ENCODE measurements at regions of chr14 and their contacts with region 1.

Region 1: GRCh38 chr14:74257078-74257989 is 18.1 kb downstream of the VSX2 start:
- DNase-seq: peak; percentile 21
- H3K4me3 ChIP-seq: peak overlapping the region; percentile 69 to 79 (median 78)
- H3K27ac ChIP-seq: no peak overlapping the region
- H3K4me1 ChIP-seq: peaks cover 4% of the 10 kb centered on the region
- H3K27me3 ChIP-seq: peaks cover 0 to 2% of the 10 kb centered on the region in 2 experiments
- CTCF ChIP-seq: peak; percentile 82 to 94
- POLR2A ChIP-seq: no peak

Region 2: DNA sequence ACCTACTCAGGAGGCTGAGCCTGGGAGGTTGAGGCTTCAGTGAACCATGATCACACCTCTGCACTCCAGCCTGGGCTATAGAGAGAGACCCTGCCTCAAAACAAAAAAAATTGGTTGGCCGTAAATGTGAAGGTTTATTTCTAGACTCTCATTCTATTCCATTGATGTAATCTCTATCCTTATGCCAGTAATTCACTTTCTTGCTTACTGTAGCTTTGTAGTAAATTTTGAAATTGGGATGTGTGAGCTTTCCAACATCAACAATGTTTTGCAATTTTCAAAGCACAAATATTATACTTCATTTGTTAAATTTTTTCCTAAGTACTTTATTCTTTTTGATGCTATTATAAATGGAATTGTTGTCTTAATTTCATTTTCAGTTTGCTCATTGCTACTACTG is 148.0 kb before region 1 on chr14:
- CTCF ChIA-PET with region 1: interaction called, 25 read pairs
- POLR2A ChIA-PET with region 1: no interaction called
- dilution Hi-C with region 1: no loop called
- intact Hi-C with region 1: loop called (anchors 1 kb)
- DNase-seq: no peak
- H3K4me3 ChIP-seq: no peak overlapping the region
- H3K27ac ChIP-seq: no peak overlapping the region
- H3K4me1 ChIP-seq: no peaks in the 10 kb centered on the region
- H3K27me3 ChIP-seq: no peaks in the 10 kb centered on the region
- CTCF ChIP-seq: no peak
- POLR2A ChIP-seq: no peak

Region 3: GRCh38 chr14:74217672-74218448 is 39.5 kb before region 1 on chr14:
- CTCF ChIA-PET with region 1: interaction called, 11 read pairs
- POLR2A ChIA-PET with region 1: no interaction called
- dilution Hi-C with region 1: no loop called
- intact Hi-C with region 1: loop called (anchors 1 kb)
- DNase-seq: peak; percentile 65
- H3K4me3 ChIP-seq: no peak overlapping the region
- H3K27ac ChIP-seq: no peak overlapping the region
- H3K4me1 ChIP-seq: no peaks in the 10 kb centered on the region
- H3K27me3 ChIP-seq: peaks cover 10 to 17% of the 10 kb centered on the region in 2 experiments
- CTCF ChIP-seq: peak; percentile 95 to 100
- POLR2A ChIP-seq: no peak

Region 4: DNA sequence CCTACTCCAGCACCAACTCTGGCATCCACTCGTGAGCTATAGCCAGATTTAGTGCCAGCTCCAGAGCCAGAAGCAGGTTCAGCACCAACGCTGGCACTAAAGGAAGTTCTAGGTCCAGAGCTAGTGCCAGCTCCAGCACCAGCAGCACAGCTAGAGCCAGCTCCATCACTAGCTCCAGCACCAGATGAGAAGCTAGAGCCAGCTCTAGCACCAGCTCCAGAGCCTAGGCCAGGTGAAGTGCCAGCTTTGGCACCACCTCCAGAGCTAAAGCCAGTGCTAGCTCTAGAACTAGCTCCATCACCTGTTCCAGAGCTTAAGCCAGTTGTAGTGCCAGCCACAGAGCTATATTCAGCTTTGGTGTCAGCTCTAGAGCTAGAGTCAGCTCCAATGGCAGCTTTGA is 20.7 kb after region 1 on chr14:
- CTCF ChIA-PET with region 1: interaction called, 12 read pairs
- POLR2A ChIA-PET with region 1: no interaction called
- dilution Hi-C with region 1: no loop called
- intact Hi-C with region 1: no loop called
- DNase-seq: no peak
- H3K4me3 ChIP-seq: no peak overlapping the region
- H3K27ac ChIP-seq: no peak overlapping the region
- H3K4me1 ChIP-seq: no peaks in the 10 kb centered on the region
- H3K27me3 ChIP-seq: no peaks in the 10 kb centered on the region
- CTCF ChIP-seq: no peak
- POLR2A ChIP-seq: no peak

Region 5: DNA sequence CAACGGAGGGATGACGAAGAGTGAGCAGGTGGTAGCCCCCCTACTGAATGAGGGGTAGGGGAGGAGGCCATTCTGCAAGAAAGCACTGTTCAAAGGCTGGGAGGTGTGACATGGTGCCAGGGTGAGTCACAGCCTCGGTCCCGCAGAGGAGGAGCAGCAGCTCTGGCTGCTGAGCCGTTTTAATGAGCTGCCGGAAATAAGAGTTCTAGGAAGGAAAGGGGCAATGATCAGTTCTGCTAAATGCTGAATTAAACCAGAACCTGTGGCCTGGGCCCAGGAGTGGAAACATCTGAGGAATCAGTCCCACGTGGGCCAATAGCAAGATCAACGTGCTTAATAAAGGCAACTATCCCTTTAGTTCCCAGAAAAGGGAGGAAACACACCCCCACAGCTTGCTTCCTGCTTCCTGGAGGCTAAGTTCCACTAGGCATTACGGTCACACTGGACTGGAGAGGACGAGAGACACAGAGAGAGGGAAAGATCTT is 41.8 kb after region 1 on chr14:
- CTCF ChIA-PET with region 1: interaction called, 9 read pairs
- POLR2A ChIA-PET with region 1: no interaction called
- dilution Hi-C with region 1: no loop called
- intact Hi-C with region 1: loop called (anchors 2 kb)
- DNase-seq: peak; percentile 73
- H3K4me3 ChIP-seq: peak overlapping the region in 1 of 3 experiments; percentile 44
- H3K27ac ChIP-seq: peak overlapping the region; percentile 73
- H3K4me1 ChIP-seq: peaks cover 28% of the 10 kb centered on the region
- H3K27me3 ChIP-seq: no peaks in the 10 kb centered on the region
- CTCF ChIP-seq: no peak
- POLR2A ChIP-seq: no peak

Measured in endothelial cell of umbilical vein (primary cell).